GM12878 (cell line): ENCODE measurements at regions of chr2 and their contacts with region 1.

Region 1: DNA sequence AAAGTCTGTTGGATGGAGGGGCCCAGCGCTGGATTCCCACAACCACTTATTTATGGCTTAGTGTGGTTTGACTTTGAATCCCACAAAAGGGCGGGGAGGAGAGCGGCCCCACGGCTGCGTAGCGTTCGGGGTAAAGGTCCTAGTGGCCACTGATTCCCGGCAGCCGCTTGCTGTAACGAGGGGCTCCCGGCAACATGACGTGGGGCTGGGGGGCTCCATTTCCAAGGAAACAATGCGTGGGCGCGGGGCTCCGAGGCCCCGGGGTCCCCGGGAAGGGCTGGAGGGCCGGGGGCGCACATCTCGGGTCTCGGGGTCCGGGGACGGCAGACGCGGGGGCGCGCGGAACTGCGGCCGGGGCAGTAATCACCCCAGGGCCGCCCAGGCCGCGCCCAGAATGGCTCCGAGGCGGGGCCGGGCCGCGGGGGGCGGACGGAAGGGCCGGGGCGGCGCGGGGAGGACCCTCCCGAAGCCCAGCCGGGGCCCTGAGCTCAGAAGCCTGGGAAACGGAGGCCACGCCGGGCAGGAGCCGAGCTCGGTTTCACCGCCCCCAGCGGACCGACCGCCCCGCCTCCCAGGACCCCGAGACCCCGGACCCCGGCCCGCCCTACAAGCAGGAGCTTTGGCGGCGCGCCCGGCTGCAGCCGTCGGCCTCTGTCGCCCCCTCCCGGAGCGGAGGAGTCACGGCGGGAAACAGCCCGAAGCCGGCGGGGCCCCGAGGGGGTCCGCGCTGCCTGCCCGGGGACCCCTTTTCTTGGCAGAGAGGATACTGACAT is 11.9 kb upstream of the MLPH start:
- DNase-seq: no peak
- ATAC-seq: peak; percentile 98
- H3K4me3 ChIP-seq: peak overlapping the region; percentile 94
- H3K27ac ChIP-seq: no peak overlapping the region
- H3K4me1 ChIP-seq: peaks cover 6% of the 10 kb centered on the region; the same call in 1 of the 2 replicates
- H3K27me3 ChIP-seq: peaks cover 6% of the 10 kb centered on the region in 2 experiments; a peak in 3 of 4 replicates
- CTCF ChIP-seq: peak; percentile 76 to 91 (median 85)
- EP300 ChIP-seq: no peak
- POLR2A ChIP-seq: 0 out of 2 replicates have a peak, but pooled peaks have one; percentile 52
- RAD21 ChIP-seq: peak; percentile 78

Region 2: DNA sequence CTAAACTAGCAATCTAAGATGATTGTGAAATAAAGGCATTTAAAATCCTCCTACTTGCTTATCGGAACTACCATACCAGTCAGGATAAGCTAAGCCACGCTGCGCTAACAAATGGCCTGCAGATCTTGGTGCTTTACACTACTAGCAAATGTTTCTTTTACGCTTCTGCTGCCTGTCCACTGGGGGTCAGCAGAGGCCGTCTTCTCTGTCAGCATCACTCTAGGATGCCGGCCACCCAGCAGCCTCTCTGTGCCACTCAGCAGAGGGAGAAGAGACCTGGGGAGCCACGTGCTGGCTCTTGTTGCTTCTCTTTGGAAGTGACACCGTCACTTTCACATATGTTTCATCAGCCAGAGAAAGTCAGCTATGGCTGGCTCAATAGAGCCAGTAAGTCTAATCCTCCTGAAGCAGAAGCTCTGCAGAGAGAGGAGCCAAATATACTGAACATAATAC is 352.9 kb before region 1 on chr2:
- CTCF ChIA-PET with region 1: interaction called, 4 read pairs
- POLR2A ChIA-PET with region 1: no interaction called
- RAD21 ChIA-PET with region 1: interaction called, 3 read pairs
- SMC1A ChIA-PET with region 1: interaction called, 3 read pairs
- in situ Hi-C with region 1: no loop called
- intact Hi-C with region 1: loop called (anchors 10 kb)
- DNase-seq: no peak
- ATAC-seq: peak; percentile 99
- H3K4me3 ChIP-seq: no peak overlapping the region
- H3K27ac ChIP-seq: no peak overlapping the region
- H3K4me1 ChIP-seq: no peaks in the 10 kb centered on the region
- H3K27me3 ChIP-seq: no peaks in the 10 kb centered on the region
- CTCF ChIP-seq: peak; percentile 61 to 67 (median 64)
- EP300 ChIP-seq: no peak
- POLR2A ChIP-seq: no peak
- RAD21 ChIP-seq: peak; percentile 63

Region 3: DNA sequence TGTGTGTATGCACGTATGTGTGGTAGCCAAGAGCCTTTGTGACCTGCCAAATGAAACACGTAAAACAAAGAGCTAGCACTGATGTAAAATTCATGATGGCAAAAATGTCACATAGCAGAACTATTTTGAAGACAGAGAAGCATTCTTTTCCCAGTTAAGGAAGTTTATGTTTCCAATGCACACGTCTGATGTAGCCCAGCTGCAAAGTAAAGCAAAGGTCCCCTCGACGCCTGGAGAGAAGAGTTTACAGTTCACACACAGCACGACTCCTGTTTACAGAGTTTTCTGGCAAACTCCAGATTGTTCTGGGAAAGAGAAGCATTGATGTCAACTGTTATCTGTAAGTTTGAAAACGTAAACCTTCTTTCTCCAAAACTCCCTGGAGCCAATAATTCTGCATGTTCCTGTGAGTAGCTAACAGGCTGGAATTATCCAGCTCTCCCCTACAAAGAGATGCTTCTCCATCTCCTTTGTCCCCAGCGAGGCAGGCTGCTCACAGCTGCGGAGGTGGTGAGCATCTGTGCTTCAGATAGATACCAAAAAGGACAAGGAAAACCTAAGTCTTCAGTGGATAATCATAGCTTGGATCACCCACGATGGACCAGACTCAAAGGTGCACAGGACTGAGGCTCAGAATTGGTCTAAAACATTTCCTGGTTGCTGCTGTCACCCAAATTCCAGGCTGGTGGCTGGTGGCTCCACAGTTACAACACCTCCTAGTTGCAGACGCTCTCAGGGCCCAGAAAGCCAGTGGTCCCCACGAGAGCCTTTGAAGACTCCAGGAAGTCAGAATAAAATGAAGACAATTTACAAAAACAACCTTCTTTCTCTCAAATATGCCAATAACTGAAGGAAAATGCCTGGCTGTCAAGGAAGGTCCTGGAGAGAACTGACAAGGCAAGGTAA is 148.6 kb before region 1 on chr2:
- CTCF ChIA-PET with region 1: no interaction called
- POLR2A ChIA-PET with region 1: no interaction called
- RAD21 ChIA-PET with region 1: no interaction called
- SMC1A ChIA-PET with region 1: no interaction called
- in situ Hi-C with region 1: no loop called
- intact Hi-C with region 1: no loop called
- DNase-seq: no peak
- ATAC-seq: no peak
- H3K4me3 ChIP-seq: no peak overlapping the region
- H3K27ac ChIP-seq: no peak overlapping the region
- H3K4me1 ChIP-seq: no peaks in the 10 kb centered on the region
- H3K27me3 ChIP-seq: peaks cover 0 to 2% of the 10 kb centered on the region in 2 experiments; a peak in 1 of 4 replicates
- CTCF ChIP-seq: no peak
- EP300 ChIP-seq: no peak
- POLR2A ChIP-seq: no peak
- RAD21 ChIP-seq: no peak

Region 4: DNA sequence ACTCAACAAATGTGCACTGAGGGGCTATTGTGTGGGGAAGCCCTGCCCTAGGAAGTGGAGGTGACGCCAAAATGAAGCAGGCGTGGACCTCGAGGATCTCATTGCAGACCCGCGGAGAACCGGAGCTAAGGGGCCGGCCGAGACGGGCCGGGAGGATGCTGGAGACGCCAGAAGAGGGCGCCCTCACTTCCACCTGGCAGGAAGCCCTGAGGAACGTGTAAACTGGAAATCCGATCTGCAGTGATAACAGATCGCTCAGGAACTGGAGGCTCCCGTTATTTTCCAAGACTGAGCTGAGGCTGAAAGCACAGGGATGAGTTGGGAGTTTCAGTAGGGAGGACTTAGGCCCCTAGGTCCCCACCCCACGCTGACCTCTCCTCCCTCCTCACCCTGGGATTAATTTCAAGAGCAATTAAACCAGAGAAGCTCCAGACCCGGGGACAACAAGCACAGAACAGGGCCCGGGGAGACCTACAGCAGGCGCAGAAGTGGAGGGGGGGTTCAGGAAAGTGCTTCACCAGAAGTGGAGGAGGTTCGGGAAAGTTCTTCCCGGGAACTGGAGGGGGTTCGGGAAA is 53.5 kb before region 1 on chr2:
- CTCF ChIA-PET with region 1: interaction called, 70 read pairs
- POLR2A ChIA-PET with region 1: no interaction called
- RAD21 ChIA-PET with region 1: interaction called, 32 read pairs
- SMC1A ChIA-PET with region 1: interaction called, 13 read pairs
- in situ Hi-C with region 1: no loop called
- intact Hi-C with region 1: loop called (anchors 2 kb)
- DNase-seq: no peak
- ATAC-seq: peak; percentile 83
- H3K4me3 ChIP-seq: no peak overlapping the region
- H3K27ac ChIP-seq: no peak overlapping the region
- H3K4me1 ChIP-seq: no peaks in the 10 kb centered on the region
- H3K27me3 ChIP-seq: peaks cover 0 to 2% of the 10 kb centered on the region in 2 experiments; a peak in 3 of 4 replicates
- CTCF ChIP-seq: peak; percentile 63 to 84 (median 70)
- EP300 ChIP-seq: no peak
- POLR2A ChIP-seq: no peak
- RAD21 ChIP-seq: peak; percentile 56

Region 5: DNA sequence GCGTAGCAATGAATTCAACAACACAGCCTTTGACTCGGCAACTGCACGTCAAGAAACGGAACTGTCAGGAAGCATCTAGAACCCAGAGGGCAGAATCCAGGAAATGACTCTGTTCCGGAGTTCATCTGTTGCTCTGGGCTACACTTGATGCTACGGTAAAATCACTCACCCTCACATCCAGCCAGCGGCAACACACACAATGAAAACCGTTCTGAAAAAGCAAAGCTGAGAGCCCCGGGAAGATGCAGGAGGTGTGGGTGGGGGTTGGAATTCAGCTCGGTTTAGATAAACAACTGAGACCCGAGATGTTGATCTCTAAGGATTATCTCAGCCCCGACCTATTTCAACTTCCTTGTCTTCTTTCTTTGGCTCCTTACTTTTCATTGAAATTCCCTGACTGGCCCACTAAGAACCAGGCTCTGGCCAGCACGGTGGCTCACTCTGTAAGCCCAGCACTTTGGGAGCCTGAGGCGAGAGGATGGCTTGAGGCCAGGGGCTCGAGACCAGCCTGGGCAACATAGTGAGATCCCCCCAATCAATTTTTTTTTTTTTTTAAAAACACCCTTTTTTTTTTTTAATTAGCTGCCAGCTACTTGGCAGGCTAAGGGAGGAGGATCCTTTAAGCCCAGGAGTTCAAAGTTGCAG is 128.7 kb after region 1 on chr2:
- CTCF ChIA-PET with region 1: no interaction called
- POLR2A ChIA-PET with region 1: no interaction called
- RAD21 ChIA-PET with region 1: no interaction called
- SMC1A ChIA-PET with region 1: no interaction called
- in situ Hi-C with region 1: no loop called
- intact Hi-C with region 1: no loop called
- DNase-seq: peak; percentile 35
- ATAC-seq: peak; percentile 90
- H3K4me3 ChIP-seq: no peak overlapping the region
- H3K27ac ChIP-seq: no peak overlapping the region
- H3K4me1 ChIP-seq: peaks cover 8% of the 10 kb centered on the region
- H3K27me3 ChIP-seq: no peaks in the 10 kb centered on the region
- CTCF ChIP-seq: no peak
- EP300 ChIP-seq: no peak
- POLR2A ChIP-seq: no peak
- RAD21 ChIP-seq: no peak

Region 6: GRCh38 chr2:238106686-238107524 is 631.8 kb after region 1 on chr2:
- CTCF ChIA-PET with region 1: no interaction called
- POLR2A ChIA-PET with region 1: no interaction called
- RAD21 ChIA-PET with region 1: no interaction called
- SMC1A ChIA-PET with region 1: no interaction called
- in situ Hi-C with region 1: no loop called
- intact Hi-C with region 1: no loop called
- DNase-seq: no peak
- ATAC-seq: peak; percentile 36
- H3K4me3 ChIP-seq: peak overlapping the region; percentile 26; the same call in 1 of the 2 replicates
- H3K27ac ChIP-seq: peak overlapping the region; percentile 62
- H3K4me1 ChIP-seq: peaks cover 21% of the 10 kb centered on the region
- H3K27me3 ChIP-seq: no peaks in the 10 kb centered on the region
- CTCF ChIP-seq: peak; percentile 40 to 62 (median 49)
- EP300 ChIP-seq: no peak
- POLR2A ChIP-seq: no peak
- RAD21 ChIP-seq: peak; percentile 37; the same call in 1 of the 2 replicates